ENCODE measurements at regions of chr14 and their contacts with region 1.

Region 1: GRCh38 chr14:94129111-94129757 is at the start of gene IFI27L2:
- DNase-seq: peak; percentile 73
- ATAC-seq: peak; percentile 96
- H3K4me3 ChIP-seq: peak within 1 kb of the TSS; percentile 92
- H3K27ac ChIP-seq: peak within 1 kb of the TSS; percentile 91
- H3K4me1 ChIP-seq: peaks cover 5% of the 10 kb centered on the region
- H3K27me3 ChIP-seq: no peaks in the 10 kb centered on the region
- CTCF ChIP-seq: peak; percentile 21
- POLR2A ChIP-seq: no peak; the same call in 1 of the 2 replicates
- RAD21 ChIP-seq: no peak
- total RNA-seq, gene IFI27L2: 43.0 and 111 TPM in 2 replicates

Region 2: DNA sequence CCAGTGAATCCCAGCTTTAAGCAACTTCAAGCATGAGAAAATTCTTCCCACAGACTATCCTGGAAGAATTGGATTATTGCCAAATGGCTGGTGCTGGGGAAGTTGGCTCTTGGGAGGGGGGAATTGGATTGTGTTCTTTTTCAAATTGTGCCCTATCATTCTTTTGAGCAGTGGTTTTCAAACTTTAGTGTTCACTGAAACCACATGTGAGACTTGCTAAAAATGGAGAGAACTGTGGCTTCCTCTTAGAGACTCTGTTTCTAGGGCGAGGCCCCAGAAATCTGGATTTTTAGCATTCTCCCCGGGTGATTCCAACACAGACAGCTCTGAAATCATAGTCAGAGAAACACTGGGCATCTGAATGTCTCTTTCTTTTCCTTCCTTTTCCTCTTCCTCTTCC is 117.4 kb before region 1 on chr14:
- CTCF ChIA-PET with region 1: no interaction called
- POLR2A ChIA-PET with region 1: interaction called, 12 read pairs
- dilution Hi-C with region 1: no loop called
- in situ Hi-C with region 1: no loop called
- intact Hi-C with region 1: no loop called
- DNase-seq: no peak
- ATAC-seq: no peak
- H3K4me3 ChIP-seq: no peak overlapping the region
- H3K27ac ChIP-seq: no peak overlapping the region
- H3K4me1 ChIP-seq: no peaks in the 10 kb centered on the region
- H3K27me3 ChIP-seq: peaks cover 41% of the 10 kb centered on the region; the same call in 1 of the 2 replicates
- CTCF ChIP-seq: no peak
- POLR2A ChIP-seq: no peak
- RAD21 ChIP-seq: no peak

Region 3: DNA sequence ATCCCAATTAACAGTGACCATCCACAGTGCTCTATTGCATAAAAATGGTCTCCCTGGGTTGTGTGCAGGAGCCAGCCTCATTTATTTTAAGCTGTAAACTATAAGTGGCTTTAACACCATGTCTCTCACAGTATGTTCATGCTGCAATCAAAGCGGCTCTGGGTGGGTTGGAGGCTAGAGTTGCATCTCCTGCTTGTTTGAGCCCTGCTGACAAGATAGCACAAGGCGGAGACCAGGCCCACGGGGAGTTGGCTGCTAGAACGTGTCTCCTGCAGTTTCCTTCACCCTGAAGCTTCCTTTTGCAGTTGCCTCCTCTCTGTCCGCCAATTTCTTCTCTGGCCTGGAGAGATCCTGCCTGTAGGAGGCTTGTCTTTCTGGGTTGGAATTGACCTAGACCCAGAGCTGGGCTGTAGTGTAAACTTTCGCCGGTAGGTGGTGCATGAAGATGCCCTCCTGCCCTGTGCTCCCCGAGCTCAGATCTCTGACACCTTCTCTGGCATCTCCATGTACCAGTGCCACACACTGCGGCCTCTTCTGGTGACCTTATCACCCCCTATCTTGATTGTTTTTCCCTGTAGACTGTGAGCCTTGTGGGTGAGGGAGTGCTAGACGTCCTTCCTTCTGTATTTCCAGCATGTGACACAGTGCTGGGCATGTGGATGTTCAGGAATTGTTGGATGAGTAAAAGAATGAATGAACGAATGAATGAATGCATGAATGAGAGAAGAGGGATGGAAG is 92.8 kb before region 1 on chr14:
- CTCF ChIA-PET with region 1: interaction called, 13 read pairs
- POLR2A ChIA-PET with region 1: no interaction called
- dilution Hi-C with region 1: no loop called
- in situ Hi-C with region 1: no loop called
- intact Hi-C with region 1: no loop called
- DNase-seq: peak; percentile 57
- ATAC-seq: peak; percentile 98
- H3K4me3 ChIP-seq: no peak overlapping the region
- H3K27ac ChIP-seq: no peak overlapping the region
- H3K4me1 ChIP-seq: peaks cover under 1% of the 10 kb centered on the region
- H3K27me3 ChIP-seq: no peaks in the 10 kb centered on the region
- CTCF ChIP-seq: peak; percentile 87
- POLR2A ChIP-seq: no peak
- RAD21 ChIP-seq: peak; percentile 75

Region 4: DNA sequence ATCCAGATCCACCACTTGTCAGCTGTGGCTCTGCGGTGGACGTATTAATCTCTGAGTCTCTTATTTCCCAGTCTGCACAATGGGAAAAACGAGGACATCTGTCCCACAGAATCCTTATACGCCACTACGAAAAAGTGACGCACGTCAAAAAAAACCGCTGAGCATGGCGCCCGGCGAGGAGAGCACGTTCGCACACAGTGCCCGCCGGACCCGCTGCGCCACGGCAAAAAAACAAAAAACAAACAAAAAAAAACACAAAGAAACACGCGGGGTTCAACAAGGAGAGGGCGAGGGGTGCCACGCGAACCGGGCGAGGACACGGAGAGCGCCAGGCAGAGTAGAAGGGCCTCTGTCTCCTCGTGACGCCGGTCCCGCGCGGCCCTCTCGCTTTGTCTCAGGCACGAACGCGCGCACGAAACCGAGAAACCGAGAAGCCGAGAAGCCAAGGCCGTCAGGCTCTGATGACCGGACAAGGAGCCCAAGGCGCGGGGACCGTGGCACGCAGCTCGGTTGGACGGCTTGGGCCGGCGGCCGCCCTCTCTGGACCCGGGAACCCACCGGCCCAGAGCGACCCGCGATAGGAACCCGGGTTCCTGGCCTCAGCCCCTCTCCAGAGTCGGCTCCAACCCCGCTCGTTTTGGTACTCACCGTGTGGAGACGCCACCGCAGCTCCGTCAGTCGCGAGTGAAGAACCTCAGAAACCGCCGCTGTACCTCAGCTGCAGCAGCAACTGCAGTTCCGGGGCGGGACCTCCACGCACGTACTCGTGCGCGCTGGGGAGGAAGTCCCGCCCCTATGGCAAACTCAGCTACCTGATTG is 48.6 kb before region 1 on chr14 and contains the start of gene DDX24:
- CTCF ChIA-PET with region 1: interaction called, 3 read pairs
- POLR2A ChIA-PET with region 1: no interaction called
- dilution Hi-C with region 1: no loop called
- in situ Hi-C with region 1: no loop called
- intact Hi-C with region 1: loop called (anchors 2 kb)
- DNase-seq: peak; percentile 93
- ATAC-seq: peak; percentile 98
- H3K4me3 ChIP-seq: peak within 1 kb of the TSS; percentile 84
- H3K27ac ChIP-seq: peak within 1 kb of the TSS; percentile 70
- H3K4me1 ChIP-seq: peaks cover 6% of the 10 kb centered on the region
- H3K27me3 ChIP-seq: no peaks in the 10 kb centered on the region
- CTCF ChIP-seq: no peak
- POLR2A ChIP-seq: peak; percentile 95
- RAD21 ChIP-seq: no peak
- total RNA-seq, gene DDX24: 152 and 155 TPM in 2 replicates

Region 5: GRCh38 chr14:94161981-94162380 is 32.7 kb after region 1 on chr14:
- CTCF ChIA-PET with region 1: no interaction called
- POLR2A ChIA-PET with region 1: no interaction called
- dilution Hi-C with region 1: no loop called
- in situ Hi-C with region 1: no loop called
- intact Hi-C with region 1: no loop called
- DNase-seq: no peak
- ATAC-seq: no peak
- H3K4me3 ChIP-seq: no peak overlapping the region
- H3K27ac ChIP-seq: no peak overlapping the region
- H3K4me1 ChIP-seq: peaks cover 3% of the 10 kb centered on the region; the same call in 1 of the 2 replicates
- H3K27me3 ChIP-seq: peaks cover 39% of the 10 kb centered on the region
- CTCF ChIP-seq: no peak
- POLR2A ChIP-seq: no peak
- RAD21 ChIP-seq: no peak